Dendritic cell treated with granulocyte-macrophage colony-stimulating factor and Interleukin-4, amounts not matched to agents 40 ng/mL and 50 ng/mL, for 4 days (primary cell): ENCODE measurements at regions of chr3 and their contacts with region 1.

Region 1: GRCh38 chr3:5006755-5007202 is 27.5 kb downstream of the BHLHE40 start:
- H3K4me3 Mint-ChIP-seq: peak overlapping the region; percentile 11
- H3K27ac Mint-ChIP-seq: peak overlapping the region; percentile 92
- H3K4me1 Mint-ChIP-seq: peaks cover 57% of the 10 kb centered on the region
- H3K27me3 Mint-ChIP-seq: no peaks in the 10 kb centered on the region

Region 2: DNA sequence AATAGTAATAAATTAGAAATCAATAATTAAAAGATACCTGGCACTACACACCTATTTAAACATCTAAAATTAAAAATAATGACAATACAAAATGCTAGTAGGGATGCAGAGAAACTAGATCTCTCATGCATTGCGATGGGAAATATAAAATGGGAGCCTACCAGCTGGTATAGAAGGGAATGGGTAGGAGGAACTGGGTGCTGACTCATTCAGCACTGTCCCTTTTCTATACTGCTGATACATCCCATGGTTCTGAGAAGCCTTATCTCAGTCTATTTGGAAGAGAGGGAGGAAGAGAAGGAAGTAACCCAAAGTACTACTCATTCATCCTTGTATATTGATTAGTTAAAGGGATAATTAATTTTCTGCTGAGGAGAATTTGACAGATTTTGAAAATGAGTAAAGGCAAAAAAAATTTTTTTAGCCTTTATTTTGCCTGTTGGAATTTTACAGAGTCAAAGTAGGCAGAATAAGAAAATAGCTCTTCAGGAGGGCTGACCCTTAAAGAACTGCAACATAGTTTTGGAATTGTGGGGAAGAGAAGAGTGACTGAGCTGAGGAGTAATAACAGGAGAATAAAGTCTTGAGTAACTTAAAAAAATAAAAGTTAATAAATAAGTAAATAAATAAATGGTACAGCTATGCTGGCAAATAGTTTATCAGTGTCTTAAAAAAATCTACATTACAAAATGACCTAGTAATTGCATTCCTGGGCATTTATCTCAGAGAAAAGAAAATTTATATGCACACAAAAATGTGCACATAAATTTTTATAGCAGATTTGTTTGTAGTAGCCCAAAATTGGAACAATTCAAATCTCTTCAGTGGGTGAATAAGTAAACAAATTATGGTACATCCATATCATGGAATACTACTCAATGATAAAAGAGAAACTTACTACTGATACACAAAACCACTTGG is 42.9 kb before region 1 on chr3:
- intact Hi-C with region 1: no loop called
- H3K4me3 Mint-ChIP-seq: no peak overlapping the region
- H3K27ac Mint-ChIP-seq: no peak overlapping the region
- H3K4me1 Mint-ChIP-seq: peaks cover 16% of the 10 kb centered on the region
- H3K27me3 Mint-ChIP-seq: no peaks in the 10 kb centered on the region

Region 3: GRCh38 chr3:4986782-4987537 is 19.8 kb before region 1 on chr3:
- intact Hi-C with region 1: loop called (anchors 2 kb)
- H3K4me3 Mint-ChIP-seq: peak overlapping the region; percentile 71
- H3K27ac Mint-ChIP-seq: peak overlapping the region; percentile 91
- H3K4me1 Mint-ChIP-seq: peaks cover 67% of the 10 kb centered on the region
- H3K27me3 Mint-ChIP-seq: no peaks in the 10 kb centered on the region

Region 4: GRCh38 chr3:5019411-5020241 is 12.8 kb after region 1 on chr3:
- intact Hi-C with region 1: loop called (anchors 1 kb)
- H3K4me3 Mint-ChIP-seq: peak overlapping the region; percentile 30
- H3K27ac Mint-ChIP-seq: peak overlapping the region; percentile 90
- H3K4me1 Mint-ChIP-seq: peaks cover 81% of the 10 kb centered on the region
- H3K27me3 Mint-ChIP-seq: no peaks in the 10 kb centered on the region

Region 5: GRCh38 chr3:5026331-5027218 is 19.8 kb after region 1 on chr3:
- intact Hi-C with region 1: loop called (anchors 1 kb)
- H3K4me3 Mint-ChIP-seq: peak overlapping the region; percentile 89
- H3K27ac Mint-ChIP-seq: peak overlapping the region; percentile 93
- H3K4me1 Mint-ChIP-seq: peaks cover 41% of the 10 kb centered on the region
- H3K27me3 Mint-ChIP-seq: peaks cover 1% of the 10 kb centered on the region

Region 6: DNA sequence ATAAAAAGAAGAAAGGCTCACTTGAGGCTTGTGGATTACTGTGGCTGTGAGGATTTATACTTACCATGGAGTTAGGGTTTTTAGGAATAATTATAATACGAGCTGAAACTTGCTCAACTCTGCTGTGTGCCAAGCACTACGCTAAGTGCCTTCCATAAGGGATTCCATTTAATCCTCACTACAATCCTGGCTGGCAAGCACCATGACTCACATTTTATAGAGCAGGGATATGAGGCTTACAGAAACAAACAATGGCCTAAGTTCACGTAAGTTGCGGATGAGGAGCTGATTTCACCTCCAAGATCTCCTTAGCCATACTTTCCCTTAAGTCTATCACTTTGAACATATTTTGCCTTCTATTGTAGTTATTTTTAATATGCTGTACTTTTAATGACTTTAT is 71.4 kb after region 1 on chr3:
- intact Hi-C with region 1: no loop called
- H3K4me3 Mint-ChIP-seq: no peak overlapping the region
- H3K27ac Mint-ChIP-seq: no peak overlapping the region
- H3K4me1 Mint-ChIP-seq: peaks cover 11% of the 10 kb centered on the region
- H3K27me3 Mint-ChIP-seq: peaks cover 13% of the 10 kb centered on the region

Region 7: DNA sequence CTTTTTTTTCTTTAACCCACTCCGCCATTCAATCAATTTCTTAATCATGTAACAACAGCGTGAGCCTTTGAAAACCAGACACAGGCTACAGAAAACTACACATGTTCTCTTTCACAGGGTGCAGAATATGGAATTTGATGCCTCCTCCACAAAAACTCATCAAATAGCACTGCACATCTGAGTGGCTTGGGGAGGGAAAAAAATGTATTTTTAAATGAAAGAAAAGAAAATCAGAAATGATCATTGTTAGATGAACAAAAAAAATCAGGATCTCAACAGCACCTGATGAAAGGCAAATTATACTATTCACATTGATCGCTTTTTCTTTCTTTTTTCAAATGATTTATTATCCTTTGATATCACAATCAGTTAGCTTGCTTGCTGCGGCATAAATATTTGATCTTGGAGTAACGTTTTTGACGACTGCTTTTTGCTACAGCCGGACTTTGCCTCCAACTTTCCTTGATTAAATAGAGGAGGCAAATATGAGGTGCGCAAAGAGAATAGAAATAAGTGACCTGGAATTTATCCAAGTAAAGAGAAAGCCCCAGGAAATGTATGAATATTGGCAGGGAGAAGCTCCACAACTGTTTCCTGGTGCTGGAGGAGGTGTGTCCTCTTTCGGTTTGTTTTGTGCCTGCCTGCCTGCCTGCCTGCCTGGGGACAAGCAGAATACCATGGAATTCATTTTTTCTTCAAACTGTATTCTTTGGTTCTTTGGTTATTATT is 243.9 kb after region 1 on chr3:
- intact Hi-C with region 1: no loop called
- H3K4me3 Mint-ChIP-seq: no peak overlapping the region
- H3K27ac Mint-ChIP-seq: no peak overlapping the region
- H3K4me1 Mint-ChIP-seq: peaks cover 3% of the 10 kb centered on the region
- H3K27me3 Mint-ChIP-seq: no peaks in the 10 kb centered on the region